Activated CD4-positive, alpha-beta memory T cell treated with anti-CD3 and anti-CD28 coated beads for 36 hours (primary cell): ENCODE measurements at regions of chr12 and their contacts with region 1.

Region 1: GRCh38 chr12:12562585-12563261 is at the start of gene DUSP16:
- DNase-seq: peak; percentile 85
- H3K4me3 Mint-ChIP-seq: peak within 1 kb of the TSS; percentile 79
- H3K27ac Mint-ChIP-seq: peak within 1 kb of the TSS; percentile 92
- H3K4me1 Mint-ChIP-seq: peaks cover 37% of the 10 kb centered on the region
- H3K27me3 Mint-ChIP-seq: no peaks in the 10 kb centered on the region
- total RNA-seq, gene DUSP16: 70.2 to 82.1 TPM

Region 2: GRCh38 chr12:12442548-12443071 is 120.1 kb before region 1 on chr12:
- CTCF ChIA-PET with region 1: interaction called, 4 read pairs
- POLR2A ChIA-PET with region 1: interaction called, 8 read pairs
- intact Hi-C with region 1: loop called (anchors 1 kb)
- DNase-seq: no peak
- H3K4me3 Mint-ChIP-seq: peak overlapping the region; percentile 30
- H3K27ac Mint-ChIP-seq: peak overlapping the region; percentile 91
- H3K4me1 Mint-ChIP-seq: peaks cover 88% of the 10 kb centered on the region
- H3K27me3 Mint-ChIP-seq: no peaks in the 10 kb centered on the region

Region 3: DNA sequence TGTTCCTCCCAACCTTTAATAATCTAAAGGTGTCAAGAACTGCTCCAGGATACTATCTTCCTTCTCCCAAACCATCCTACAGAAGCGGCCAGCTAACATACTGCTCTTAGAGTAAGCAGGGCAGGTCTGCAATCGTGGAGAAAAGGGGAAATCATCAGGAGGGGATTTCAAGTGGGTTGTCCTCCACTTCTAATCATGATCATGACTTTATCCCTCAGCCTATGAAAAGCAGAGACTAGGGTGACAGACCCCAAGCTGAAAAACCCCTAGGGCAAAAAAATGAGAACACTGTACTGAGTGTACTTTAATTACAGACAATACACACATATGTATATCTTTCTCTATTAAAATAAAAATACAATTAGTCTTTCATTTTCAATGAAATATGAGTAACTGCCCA is 14.0 kb before region 1 on chr12:
- CTCF ChIA-PET with region 1: interaction called, 6 read pairs
- POLR2A ChIA-PET with region 1: interaction called, 10 read pairs
- intact Hi-C with region 1: no loop called
- DNase-seq: no peak
- H3K4me3 Mint-ChIP-seq: no peak overlapping the region
- H3K27ac Mint-ChIP-seq: no peak overlapping the region
- H3K4me1 Mint-ChIP-seq: peaks cover 43% of the 10 kb centered on the region
- H3K27me3 Mint-ChIP-seq: no peaks in the 10 kb centered on the region

Region 4: DNA sequence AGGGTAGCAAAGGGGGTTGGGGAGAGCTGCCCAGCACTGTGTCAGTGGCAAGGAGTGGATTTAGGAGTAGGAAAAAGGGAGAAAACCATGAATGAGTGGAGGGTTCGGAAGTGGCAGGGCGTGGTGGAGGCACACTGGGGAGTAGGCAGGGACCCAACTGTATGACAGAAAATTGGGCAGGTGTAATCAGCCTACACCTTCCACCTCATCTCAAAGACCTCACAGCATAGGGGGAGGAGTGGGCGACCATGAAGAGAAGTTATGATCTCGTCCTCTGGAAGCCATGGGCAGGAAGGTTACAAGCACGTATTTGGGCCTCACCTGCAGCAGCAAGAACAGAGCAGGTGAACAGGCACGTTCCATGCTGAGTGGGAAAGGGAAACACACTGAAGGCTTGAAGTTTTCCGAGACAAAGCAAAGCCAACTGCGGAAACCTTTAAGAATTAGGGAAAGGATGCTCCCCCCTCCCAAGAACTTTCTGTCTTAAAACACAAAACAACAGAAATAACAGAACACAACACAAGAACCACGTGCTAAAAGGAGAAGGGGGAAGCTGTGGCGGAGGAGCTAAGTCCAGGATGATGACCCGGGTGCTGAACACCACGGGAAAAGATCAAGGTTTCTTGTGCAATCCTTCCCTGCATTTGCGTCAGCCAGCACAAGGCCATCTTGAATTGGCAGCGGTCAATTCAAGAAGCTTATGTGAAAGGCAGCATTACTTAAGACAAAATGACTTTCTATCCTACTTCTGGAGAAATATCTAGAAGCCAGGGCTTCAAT is 37.7 kb after region 1 on chr12:
- CTCF ChIA-PET with region 1: no interaction called
- POLR2A ChIA-PET with region 1: no interaction called
- intact Hi-C with region 1: no loop called
- DNase-seq: no peak
- H3K4me3 Mint-ChIP-seq: no peak overlapping the region
- H3K27ac Mint-ChIP-seq: no peak overlapping the region
- H3K4me1 Mint-ChIP-seq: peaks cover 3% of the 10 kb centered on the region
- H3K27me3 Mint-ChIP-seq: no peaks in the 10 kb centered on the region

Region 5: DNA sequence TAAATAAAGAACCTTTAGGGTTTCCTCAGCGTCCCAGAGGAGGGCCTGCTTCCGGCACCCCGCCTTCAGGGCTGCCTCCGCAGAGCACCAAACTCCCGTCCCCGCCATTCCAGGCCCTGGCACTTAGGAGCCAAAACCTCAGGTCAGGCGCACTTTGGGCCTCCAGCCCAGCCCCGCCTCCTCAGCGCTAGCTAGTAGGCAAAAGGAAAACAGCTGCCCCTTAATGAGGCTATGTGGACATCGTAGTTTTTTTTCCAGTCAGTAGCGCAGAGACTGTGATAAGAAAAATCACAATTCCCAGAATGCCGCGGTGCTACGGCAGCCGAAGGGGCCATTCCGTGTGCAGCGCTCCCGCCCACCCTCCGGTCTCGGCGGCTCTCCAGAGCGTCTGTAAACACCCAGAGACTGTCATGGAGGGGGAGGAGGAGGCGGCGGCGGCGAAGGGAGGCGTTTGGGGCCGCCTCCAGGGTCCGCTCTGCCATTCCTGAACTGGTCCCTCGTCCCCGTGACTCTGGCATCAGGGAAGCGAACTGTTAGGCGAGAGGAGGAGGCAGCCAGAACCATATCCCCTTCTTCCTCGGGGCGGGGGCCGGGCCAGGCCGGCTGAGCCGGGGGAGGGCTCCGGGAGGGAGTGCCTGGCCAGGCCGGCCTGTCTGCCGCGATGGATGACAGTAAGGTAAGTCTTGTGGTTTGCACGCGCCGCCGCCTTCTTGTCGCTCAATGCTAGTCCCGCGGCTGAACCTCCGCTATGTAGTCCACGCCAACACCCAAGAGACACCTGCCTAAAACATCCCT is 49.0 kb after region 1 on chr12 and contains the start of gene CREBL2:
- CTCF ChIA-PET with region 1: interaction called, 5 read pairs
- POLR2A ChIA-PET with region 1: interaction called, 4 read pairs
- intact Hi-C with region 1: loop called (anchors 1 kb)
- DNase-seq: peak; percentile 92
- H3K4me3 Mint-ChIP-seq: peak within 1 kb of the TSS; percentile 82
- H3K27ac Mint-ChIP-seq: peak within 1 kb of the TSS; percentile 95
- H3K4me1 Mint-ChIP-seq: peaks cover 54% of the 10 kb centered on the region
- H3K27me3 Mint-ChIP-seq: no peaks in the 10 kb centered on the region
- total RNA-seq, gene CREBL2: 30.4 to 32.2 TPM

Region 6: DNA sequence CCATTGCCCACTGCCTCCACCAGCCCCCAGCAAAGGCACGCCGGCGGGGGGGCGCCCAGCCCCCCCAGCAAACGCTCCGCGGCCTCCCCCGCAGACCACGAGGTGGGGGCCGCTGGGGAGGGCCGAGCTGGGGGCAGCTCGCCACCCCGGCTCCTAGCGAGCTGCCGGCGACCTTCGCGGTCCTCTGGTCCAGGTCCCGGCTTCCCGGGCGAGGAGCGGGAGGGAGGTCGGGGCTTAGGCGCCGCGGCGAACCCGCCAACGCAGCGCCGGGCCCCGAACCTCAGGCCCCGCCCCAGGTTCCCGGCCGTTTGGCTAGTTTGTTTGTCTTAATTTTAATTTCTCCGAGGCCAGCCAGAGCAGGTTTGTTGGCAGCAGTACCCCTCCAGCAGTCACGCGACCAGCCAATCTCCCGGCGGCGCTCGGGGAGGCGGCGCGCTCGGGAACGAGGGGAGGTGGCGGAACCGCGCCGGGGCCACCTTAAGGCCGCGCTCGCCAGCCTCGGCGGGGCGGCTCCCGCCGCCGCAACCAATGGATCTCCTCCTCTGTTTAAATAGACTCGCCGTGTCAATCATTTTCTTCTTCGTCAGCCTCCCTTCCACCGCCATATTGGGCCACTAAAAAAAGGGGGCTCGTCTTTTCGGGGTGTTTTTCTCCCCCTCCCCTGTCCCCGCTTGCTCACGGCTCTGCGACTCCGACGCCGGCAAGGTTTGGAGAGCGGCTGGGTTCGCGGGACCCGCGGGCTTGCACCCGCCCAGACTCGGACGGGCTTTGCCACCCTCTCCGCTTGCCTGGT is 154.3 kb after region 1 on chr12 and contains the start of gene CDKN1B:
- CTCF ChIA-PET with region 1: interaction called, 3 read pairs
- POLR2A ChIA-PET with region 1: interaction called, 8 read pairs
- intact Hi-C with region 1: loop called (anchors 2 kb)
- DNase-seq: peak; percentile 92
- H3K4me3 Mint-ChIP-seq: peak within 1 kb of the TSS; percentile 98
- H3K27ac Mint-ChIP-seq: peak within 1 kb of the TSS; percentile 98
- H3K4me1 Mint-ChIP-seq: peaks cover 45% of the 10 kb centered on the region
- H3K27me3 Mint-ChIP-seq: no peaks in the 10 kb centered on the region
- total RNA-seq, gene CDKN1B: 52.4 to 52.8 TPM

Region 7: DNA sequence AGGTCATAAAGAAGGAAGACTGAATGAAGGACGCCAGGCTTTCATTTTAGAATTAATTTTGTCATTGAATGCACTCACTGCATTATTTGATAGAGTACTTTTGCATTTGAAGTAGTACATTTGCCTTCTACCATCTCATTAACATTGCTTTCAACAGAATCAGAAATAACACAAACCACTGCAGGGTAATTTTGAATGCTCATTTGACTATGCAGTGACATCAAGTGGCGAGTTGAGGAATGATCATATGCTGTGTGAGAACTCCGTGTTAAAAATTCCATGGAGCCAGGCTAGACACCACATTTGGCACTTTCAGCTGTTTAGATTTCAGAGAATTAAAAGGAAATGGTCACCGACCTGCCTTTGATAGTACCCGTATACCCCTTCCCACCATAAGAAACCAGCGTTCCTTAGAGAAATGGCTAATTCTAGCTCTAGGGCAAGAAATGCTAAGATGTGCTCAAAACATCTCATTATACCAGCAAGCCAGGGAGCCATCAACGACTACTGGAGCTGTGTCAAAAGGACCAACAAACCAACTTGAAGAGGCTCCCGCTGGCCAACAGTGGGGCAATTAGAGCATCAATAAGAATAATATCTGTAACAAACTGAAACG is 420.8 kb after region 1 on chr12:
- CTCF ChIA-PET with region 1: no interaction called
- POLR2A ChIA-PET with region 1: no interaction called
- intact Hi-C with region 1: no loop called
- DNase-seq: no peak
- H3K4me3 Mint-ChIP-seq: no peak overlapping the region
- H3K27ac Mint-ChIP-seq: no peak overlapping the region
- H3K4me1 Mint-ChIP-seq: peaks cover 2% of the 10 kb centered on the region
- H3K27me3 Mint-ChIP-seq: no peaks in the 10 kb centered on the region

Region 8: GRCh38 chr12:13383379-13383778 is 820.7 kb after region 1 on chr12:
- CTCF ChIA-PET with region 1: no interaction called
- POLR2A ChIA-PET with region 1: no interaction called
- intact Hi-C with region 1: no loop called
- DNase-seq: no peak
- H3K4me3 Mint-ChIP-seq: no peak overlapping the region
- H3K27ac Mint-ChIP-seq: no peak overlapping the region
- H3K4me1 Mint-ChIP-seq: no peaks in the 10 kb centered on the region
- H3K27me3 Mint-ChIP-seq: peaks cover 2% of the 10 kb centered on the region